Ovary (tissue), 10 donors: ENCODE measurements at regions of chr12 and their contacts with region 1.

Region 1: GRCh38 chr12:66107451-66107915 is 23.1 kb downstream of the LLPH start:
- DNase-seq: peak in 3 of 5 donors; percentile 26 to 66 (median 39)
- H3K4me3 ChIP-seq: no peak overlapping the region
- H3K27ac ChIP-seq: no peak overlapping the region
- H3K4me1 ChIP-seq: no peaks in the 10 kb centered on the region
- H3K27me3 ChIP-seq: no peaks in the 10 kb centered on the region
- CTCF ChIP-seq: peak; percentile 59 to 73 (median 60)
- EP300 ChIP-seq: no peak
- POLR2A ChIP-seq: no peak

Region 2: DNA sequence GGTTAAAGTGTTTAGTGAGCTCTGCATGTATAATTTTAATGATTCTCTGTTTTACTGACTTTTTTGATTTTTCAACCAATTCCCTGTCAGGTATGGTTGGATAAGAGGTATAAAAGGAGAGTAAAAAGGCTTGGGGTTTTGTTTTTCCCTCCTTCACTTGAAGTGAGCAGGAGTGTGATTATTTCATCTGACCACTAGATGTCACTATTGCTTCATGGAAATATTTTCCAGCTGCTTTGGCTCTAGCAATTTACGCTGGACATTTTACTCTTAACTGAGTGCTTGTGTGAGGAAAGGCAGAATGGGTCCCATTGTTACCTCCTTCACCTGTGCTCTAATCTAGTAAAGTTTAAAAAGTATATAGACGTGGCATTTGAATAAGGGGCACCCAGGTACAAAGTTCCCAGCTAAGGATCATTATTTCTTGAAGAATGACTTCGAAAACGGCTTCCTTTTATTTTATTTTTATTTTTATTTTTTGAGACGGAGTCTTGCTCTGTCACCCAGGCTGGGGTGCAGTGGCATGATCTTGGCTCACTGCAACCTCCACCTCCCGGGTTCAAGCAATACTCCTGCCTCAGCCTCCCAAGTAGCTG is 1216.5 kb before region 1 on chr12:
- intact Hi-C with region 1: loop called in 2 of 4 experiments (anchors 5 to 10 kb)
- DNase-seq: no peak
- H3K4me3 ChIP-seq: no peak overlapping the region
- H3K27ac ChIP-seq: no peak overlapping the region
- H3K4me1 ChIP-seq: no peaks in the 10 kb centered on the region
- H3K27me3 ChIP-seq: no peaks in the 10 kb centered on the region
- CTCF ChIP-seq: peak; percentile 67 to 70 (median 67)
- EP300 ChIP-seq: no peak
- POLR2A ChIP-seq: no peak